Caco-2 (cell line): ENCODE measurements at regions of chr7 and their contacts with region 1.

Region 1: DNA sequence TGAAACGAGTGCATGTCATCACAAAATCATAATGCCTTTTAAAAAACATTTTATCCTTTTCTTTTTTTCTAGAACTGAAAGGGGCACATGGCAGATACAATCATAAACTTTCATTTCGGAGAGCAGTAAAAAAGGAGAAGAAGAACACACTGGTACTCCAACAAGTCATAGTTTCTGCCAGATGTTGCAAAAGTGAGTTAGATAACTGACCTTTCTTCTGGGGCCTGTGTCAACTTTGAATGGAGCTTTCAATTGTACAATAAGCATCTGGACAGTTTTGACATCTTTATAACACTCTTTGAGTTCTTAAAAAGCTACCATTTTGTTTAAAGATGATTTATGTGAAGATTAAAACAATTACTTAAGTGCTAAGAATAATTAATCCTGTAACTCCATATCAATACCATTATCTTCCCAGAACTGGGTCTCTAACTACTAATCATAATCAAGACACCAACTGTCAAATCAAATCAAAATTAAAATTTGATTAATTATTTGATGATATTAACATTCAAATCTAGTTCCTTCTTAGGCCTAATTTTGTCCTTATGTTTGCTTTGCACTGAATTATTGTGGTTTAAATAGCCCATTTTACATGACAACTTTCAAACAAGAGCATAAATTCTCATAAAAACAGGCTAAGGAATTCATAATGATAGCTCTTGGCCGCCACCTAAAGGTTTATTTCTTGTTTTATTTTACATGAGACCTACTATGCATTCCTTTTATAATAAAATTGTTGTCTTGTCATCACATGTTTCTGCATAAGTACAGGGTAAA is 19.5 kb upstream of the ITGB8 start:
- DNase-seq: peak in 1 of 2 experiments; percentile 58
- H3K4me3 ChIP-seq: no peak overlapping the region
- H3K4me3 Mint-ChIP-seq: no peak overlapping the region
- H3K27ac Mint-ChIP-seq: no peak overlapping the region
- H3K4me1 ChIP-seq: peaks cover 27% of the 10 kb centered on the region
- H3K4me1 Mint-ChIP-seq: peaks cover 32% of the 10 kb centered on the region
- H3K27me3 ChIP-seq: no peaks in the 10 kb centered on the region
- H3K27me3 Mint-ChIP-seq: no peaks in the 10 kb centered on the region
- CTCF ChIP-seq: peak; percentile 38 to 51

Region 2: GRCh38 chr7:19713676-19714075 is 597.5 kb before region 1 on chr7:
- CTCF ChIA-PET with region 1: interaction called, 7 read pairs
- POLR2A ChIA-PET with region 1: no interaction called
- intact Hi-C with region 1: loop called (anchors 5 kb)
- DNase-seq: peak in 1 of 2 experiments; percentile 55
- H3K4me3 ChIP-seq: no peak overlapping the region
- H3K4me3 Mint-ChIP-seq: no peak overlapping the region
- H3K27ac Mint-ChIP-seq: no peak overlapping the region
- H3K4me1 ChIP-seq: peaks cover 7% of the 10 kb centered on the region; the same call in 1 of the 2 replicates
- H3K4me1 Mint-ChIP-seq: peaks cover 14% of the 10 kb centered on the region
- H3K27me3 ChIP-seq: no peaks in the 10 kb centered on the region
- H3K27me3 Mint-ChIP-seq: no peaks in the 10 kb centered on the region
- CTCF ChIP-seq: peak; percentile 59 to 61

Region 3: DNA sequence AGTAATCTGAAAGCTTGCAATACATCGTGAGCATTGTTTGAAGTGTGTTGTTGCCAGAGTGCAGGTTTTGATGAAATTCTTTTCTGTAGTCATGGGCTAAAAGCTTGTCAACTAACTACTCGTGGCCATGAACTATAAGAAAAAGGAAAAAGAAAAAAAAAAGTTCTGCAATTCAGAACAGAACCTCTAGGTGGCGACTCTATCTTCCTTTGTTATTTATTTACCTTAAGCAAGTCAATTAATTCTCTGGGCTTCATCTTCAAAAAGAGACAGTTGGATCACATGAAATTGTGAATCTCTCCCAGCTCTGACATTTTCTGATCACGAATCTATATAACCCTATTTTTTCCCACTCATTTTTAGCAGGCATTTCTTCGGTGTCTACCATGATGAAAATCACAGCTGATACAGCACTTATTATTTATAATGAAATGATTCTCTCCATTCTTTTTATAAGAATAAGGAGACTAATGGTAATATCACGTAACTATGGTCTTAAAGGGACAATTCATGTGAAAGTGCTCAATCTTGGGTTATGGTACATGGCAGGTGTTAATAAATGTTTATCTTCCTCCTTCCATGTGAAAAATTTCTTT is 556.5 kb before region 1 on chr7:
- CTCF ChIA-PET with region 1: no interaction called
- POLR2A ChIA-PET with region 1: no interaction called
- intact Hi-C with region 1: loop called (anchors 1 kb)
- DNase-seq: peak in 1 of 2 experiments; percentile 52
- H3K4me3 ChIP-seq: no peak overlapping the region
- H3K4me3 Mint-ChIP-seq: no peak overlapping the region
- H3K27ac Mint-ChIP-seq: no peak overlapping the region
- H3K4me1 ChIP-seq: peaks cover 8% of the 10 kb centered on the region; the same call in 1 of the 2 replicates
- H3K4me1 Mint-ChIP-seq: peaks cover 6% of the 10 kb centered on the region
- H3K27me3 ChIP-seq: no peaks in the 10 kb centered on the region
- H3K27me3 Mint-ChIP-seq: no peaks in the 10 kb centered on the region
- CTCF ChIP-seq: peak; percentile 65 to 78

Region 4: GRCh38 chr7:20158684-20159083 is 152.5 kb before region 1 on chr7:
- CTCF ChIA-PET with region 1: no interaction called
- POLR2A ChIA-PET with region 1: no interaction called
- intact Hi-C with region 1: loop called (anchors 1 kb)
- DNase-seq: peak in 1 of 2 experiments; percentile 10
- H3K4me3 ChIP-seq: no peak overlapping the region
- H3K4me3 Mint-ChIP-seq: peak overlapping the region; percentile 25
- H3K27ac Mint-ChIP-seq: peak overlapping the region; percentile 66
- H3K4me1 ChIP-seq: peaks cover 15% of the 10 kb centered on the region; the same call in 1 of the 2 replicates
- H3K4me1 Mint-ChIP-seq: peaks cover 16% of the 10 kb centered on the region
- H3K27me3 ChIP-seq: no peaks in the 10 kb centered on the region
- H3K27me3 Mint-ChIP-seq: no peaks in the 10 kb centered on the region
- CTCF ChIP-seq: no peak

Region 5: GRCh38 chr7:20172736-20173334 is 138.3 kb before region 1 on chr7:
- CTCF ChIA-PET with region 1: interaction called, 3 read pairs
- POLR2A ChIA-PET with region 1: no interaction called
- intact Hi-C with region 1: loop called (anchors 1 kb)
- DNase-seq: peak; percentile 78 to 82
- H3K4me3 ChIP-seq: no peak overlapping the region
- H3K4me3 Mint-ChIP-seq: no peak overlapping the region
- H3K27ac Mint-ChIP-seq: no peak overlapping the region
- H3K4me1 ChIP-seq: peaks cover 6% of the 10 kb centered on the region
- H3K4me1 Mint-ChIP-seq: peaks cover 21% of the 10 kb centered on the region
- H3K27me3 ChIP-seq: no peaks in the 10 kb centered on the region
- H3K27me3 Mint-ChIP-seq: no peaks in the 10 kb centered on the region
- CTCF ChIP-seq: peak; percentile 69 to 88